ENCODE measurements at regions of chr2 and their contacts with region 1.

Region 1: GRCh38 chr2:42663106-42663780 is 94.8 kb downstream of the MTA3 start:
- DNase-seq: peak; percentile 78
- CTCF ChIP-seq: peak; percentile 98

Region 2: DNA sequence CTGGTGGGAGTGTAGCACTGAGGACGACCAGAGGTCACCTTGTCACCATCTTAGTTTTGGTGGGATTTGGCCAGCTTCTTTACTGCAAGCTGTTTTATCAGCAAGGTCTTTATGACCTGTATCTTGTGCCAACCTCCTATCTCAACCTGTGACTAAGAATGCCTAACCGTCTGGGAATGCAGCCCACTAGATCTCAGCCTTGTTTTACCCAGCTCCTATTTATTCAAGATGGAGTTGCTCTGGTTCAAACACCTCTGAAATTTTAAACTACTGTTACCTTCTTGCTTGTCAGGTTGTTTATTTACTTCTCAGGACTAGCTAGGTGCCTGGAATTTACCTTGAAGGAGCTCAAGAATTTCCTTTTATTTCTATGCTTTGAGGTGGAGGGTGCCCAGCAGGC is 160.0 kb before region 1 on chr2:
- CTCF ChIA-PET with region 1: interaction called, 48 read pairs
- POLR2A ChIA-PET with region 1: no interaction called
- DNase-seq: no peak
- CTCF ChIP-seq: no peak

Region 3: DNA sequence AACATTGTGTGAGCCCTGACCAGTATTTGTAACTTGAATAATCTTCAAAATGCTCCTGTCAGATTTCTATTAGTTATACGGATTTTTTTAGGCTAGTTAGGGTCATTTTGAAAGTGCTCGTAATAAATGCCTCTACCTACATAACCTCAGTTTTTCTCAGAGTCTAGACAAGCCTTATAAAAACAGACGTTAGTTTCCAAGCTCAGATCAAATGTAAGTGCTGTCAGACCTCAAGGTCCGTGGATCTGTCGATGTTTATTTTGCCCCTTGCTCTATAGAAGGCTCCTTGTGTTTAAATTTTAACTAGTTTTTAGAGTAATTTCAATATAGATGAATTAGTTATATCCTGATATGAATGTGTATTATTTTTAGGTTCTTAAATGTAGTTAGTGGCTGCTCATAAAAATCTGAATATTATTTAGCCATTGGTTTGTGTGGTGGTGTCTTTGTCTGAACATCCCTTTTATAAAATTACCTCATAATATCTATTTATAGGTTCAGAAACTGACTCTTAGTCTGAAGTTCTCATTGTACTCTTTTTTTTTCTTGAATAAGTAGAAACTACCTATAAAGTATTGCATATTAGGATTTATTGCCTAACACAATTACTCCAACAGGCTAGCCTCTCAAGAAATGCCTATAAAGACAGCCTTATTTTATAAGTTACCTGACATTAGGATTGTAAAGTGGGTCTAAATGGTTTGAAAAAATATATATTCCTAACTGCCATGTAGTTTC is 23.7 kb before region 1 on chr2:
- CTCF ChIA-PET with region 1: interaction called, 21 read pairs
- POLR2A ChIA-PET with region 1: no interaction called
- DNase-seq: peak; percentile 40
- CTCF ChIP-seq: no peak

Region 4: GRCh38 chr2:42652086-42652485 is 11.2 kb before region 1 on chr2:
- CTCF ChIA-PET with region 1: interaction called, 30 read pairs
- POLR2A ChIA-PET with region 1: no interaction called
- DNase-seq: no peak
- CTCF ChIP-seq: no peak

Region 5: DNA sequence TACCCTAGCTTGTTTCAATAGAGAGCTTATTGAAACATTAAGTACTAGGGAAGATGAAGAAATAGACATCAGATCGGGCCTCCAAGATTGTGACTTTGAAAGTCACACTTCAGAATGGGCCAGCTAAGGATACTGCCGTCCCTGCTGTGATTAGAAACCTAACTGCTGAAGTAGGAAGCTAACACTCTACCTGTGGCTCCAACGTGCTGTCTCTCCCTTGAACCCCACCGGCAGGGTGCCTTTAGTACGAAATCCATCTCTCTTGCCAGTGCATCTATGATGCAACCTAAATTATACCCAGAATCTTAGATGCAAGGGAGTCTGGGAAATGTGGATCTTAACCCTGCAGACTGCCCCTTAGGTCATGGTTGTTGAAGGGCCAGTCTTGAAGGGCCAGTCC is 22.1 kb after region 1 on chr2:
- CTCF ChIA-PET with region 1: interaction called, 12 read pairs
- POLR2A ChIA-PET with region 1: no interaction called
- DNase-seq: no peak
- CTCF ChIP-seq: no peak

Measured in GM10248 (cell line).